Endothelial cell of umbilical vein (primary cell): ENCODE measurements at regions of chr9 and their contacts with region 1.

Region 1: GRCh38 chr9:2872257-2872935 is 28.5 kb upstream of the PUM3 start:
- DNase-seq: no peak
- H3K4me3 ChIP-seq: no peak overlapping the region
- H3K27ac ChIP-seq: no peak overlapping the region
- H3K4me1 ChIP-seq: no peaks in the 10 kb centered on the region
- H3K27me3 ChIP-seq: peaks cover 16 to 20% of the 10 kb centered on the region in 2 experiments
- CTCF ChIP-seq: no peak
- POLR2A ChIP-seq: no peak

Region 2: GRCh38 chr9:2824564-2824963 is 47.8 kb before region 1 on chr9:
- CTCF ChIA-PET with region 1: no interaction called
- POLR2A ChIA-PET with region 1: no interaction called
- dilution Hi-C with region 1: no loop called
- intact Hi-C with region 1: no loop called
- DNase-seq: no peak
- H3K4me3 ChIP-seq: no peak overlapping the region
- H3K27ac ChIP-seq: no peak overlapping the region
- H3K4me1 ChIP-seq: no peaks in the 10 kb centered on the region
- H3K27me3 ChIP-seq: no peaks in the 10 kb centered on the region
- CTCF ChIP-seq: no peak
- POLR2A ChIP-seq: no peak

Region 3: DNA sequence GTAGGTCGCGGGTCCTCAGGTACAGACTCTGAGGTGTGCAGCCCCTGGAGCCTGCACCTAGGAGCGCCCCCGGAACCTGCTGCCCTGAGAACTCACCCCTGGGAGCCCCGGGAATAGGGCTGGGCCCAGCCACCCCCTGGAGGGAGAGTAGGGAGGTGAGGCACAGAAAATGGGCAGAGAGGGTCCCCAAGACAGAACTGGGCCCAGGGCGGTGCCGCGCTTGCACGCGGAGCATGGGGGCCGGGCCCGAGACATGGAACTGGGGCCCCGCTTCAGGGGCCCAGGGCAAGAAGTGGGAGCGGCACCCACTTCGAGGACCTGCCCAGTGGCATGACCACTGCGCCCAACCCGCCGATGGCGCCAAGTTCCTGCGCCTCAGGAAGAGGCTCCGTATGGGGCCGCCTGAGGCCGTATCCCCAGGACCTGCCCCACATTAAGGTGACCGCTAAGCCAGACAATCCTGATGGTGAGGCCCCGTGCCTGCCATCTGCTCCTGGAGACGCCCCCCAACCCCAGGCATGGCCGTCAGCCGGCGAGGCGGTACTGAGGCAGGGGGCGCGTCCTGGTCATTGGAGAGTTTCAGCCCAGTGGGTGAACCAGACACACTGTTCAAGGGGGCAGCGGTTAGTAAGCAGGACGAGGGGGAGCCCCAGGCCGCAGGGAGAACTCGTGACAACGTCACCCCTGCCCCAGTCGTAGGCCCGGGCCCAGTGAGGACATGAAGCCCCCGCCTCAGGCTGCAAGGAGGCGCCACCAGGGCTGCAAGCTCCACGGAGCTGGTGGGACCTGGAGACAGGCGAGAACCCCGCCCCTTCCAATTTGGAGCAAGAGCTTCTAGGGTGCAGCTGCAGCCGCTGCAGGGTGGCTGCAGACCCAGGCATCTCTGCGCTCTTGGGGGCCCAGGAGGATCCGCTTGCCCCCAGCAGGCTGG is 61.0 kb after region 1 on chr9:
- CTCF ChIA-PET with region 1: no interaction called
- POLR2A ChIA-PET with region 1: no interaction called
- dilution Hi-C with region 1: no loop called
- intact Hi-C with region 1: loop called (anchors 10 kb)
- DNase-seq: no peak
- H3K4me3 ChIP-seq: no peak overlapping the region
- H3K27ac ChIP-seq: no peak overlapping the region
- H3K4me1 ChIP-seq: no peaks in the 10 kb centered on the region
- H3K27me3 ChIP-seq: no peaks in the 10 kb centered on the region
- CTCF ChIP-seq: no peak
- POLR2A ChIP-seq: no peak